ENCODE measurements at regions of chr2 and their contacts with region 1.

Region 1: GRCh38 chr2:74587664-74588277 is 33.3 kb downstream of the DOK1 start:
- DNase-seq: peak; percentile 43
- ATAC-seq: peak; percentile 96
- H3K4me3 Mint-ChIP-seq: no peak overlapping the region
- H3K27ac Mint-ChIP-seq: no peak overlapping the region
- H3K4me1 Mint-ChIP-seq: peaks cover 8% of the 10 kb centered on the region
- H3K27me3 Mint-ChIP-seq: peaks cover 4% of the 10 kb centered on the region
- CTCF ChIP-seq: no peak

Region 2: DNA sequence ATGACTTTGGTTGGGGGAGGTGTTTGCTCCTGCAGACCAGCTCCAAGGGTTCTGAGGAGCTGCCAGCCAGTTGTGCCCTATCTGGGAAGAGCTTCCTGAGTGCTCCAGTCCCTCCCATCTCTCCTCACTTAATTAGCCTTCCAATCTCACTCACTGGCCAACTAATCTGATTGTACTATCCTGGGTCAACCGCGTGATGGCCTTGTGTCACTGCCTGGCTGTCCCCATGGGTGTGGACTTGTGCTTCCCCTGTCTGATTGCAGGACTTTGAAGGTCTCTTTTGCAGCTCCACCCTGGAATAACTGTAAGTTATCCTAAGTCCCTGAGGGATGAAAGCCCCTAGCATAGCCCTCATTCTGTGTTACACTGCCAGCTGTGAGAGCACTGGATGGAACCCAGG is 309.6 kb before region 1 on chr2:
- CTCF ChIA-PET with region 1: no interaction called
- POLR2A ChIA-PET with region 1: no interaction called
- intact Hi-C with region 1: no loop called
- DNase-seq: no peak
- ATAC-seq: no peak
- H3K4me3 Mint-ChIP-seq: no peak overlapping the region
- H3K27ac Mint-ChIP-seq: no peak overlapping the region
- H3K4me1 Mint-ChIP-seq: peaks cover 10% of the 10 kb centered on the region
- H3K27me3 Mint-ChIP-seq: peaks cover 1% of the 10 kb centered on the region
- CTCF ChIP-seq: no peak

Region 3: GRCh38 chr2:74391580-74392448 is 196.0 kb before region 1 on chr2:
- CTCF ChIA-PET with region 1: interaction called, 6 read pairs
- POLR2A ChIA-PET with region 1: no interaction called
- intact Hi-C with region 1: loop called (anchors 2 kb)
- DNase-seq: peak; percentile 94
- ATAC-seq: peak; percentile 89
- H3K4me3 Mint-ChIP-seq: peak overlapping the region; percentile 96
- H3K27ac Mint-ChIP-seq: peak overlapping the region; percentile 99
- H3K4me1 Mint-ChIP-seq: peaks cover 6% of the 10 kb centered on the region
- H3K27me3 Mint-ChIP-seq: peaks cover 4% of the 10 kb centered on the region
- CTCF ChIP-seq: peak; percentile 93

Region 4: DNA sequence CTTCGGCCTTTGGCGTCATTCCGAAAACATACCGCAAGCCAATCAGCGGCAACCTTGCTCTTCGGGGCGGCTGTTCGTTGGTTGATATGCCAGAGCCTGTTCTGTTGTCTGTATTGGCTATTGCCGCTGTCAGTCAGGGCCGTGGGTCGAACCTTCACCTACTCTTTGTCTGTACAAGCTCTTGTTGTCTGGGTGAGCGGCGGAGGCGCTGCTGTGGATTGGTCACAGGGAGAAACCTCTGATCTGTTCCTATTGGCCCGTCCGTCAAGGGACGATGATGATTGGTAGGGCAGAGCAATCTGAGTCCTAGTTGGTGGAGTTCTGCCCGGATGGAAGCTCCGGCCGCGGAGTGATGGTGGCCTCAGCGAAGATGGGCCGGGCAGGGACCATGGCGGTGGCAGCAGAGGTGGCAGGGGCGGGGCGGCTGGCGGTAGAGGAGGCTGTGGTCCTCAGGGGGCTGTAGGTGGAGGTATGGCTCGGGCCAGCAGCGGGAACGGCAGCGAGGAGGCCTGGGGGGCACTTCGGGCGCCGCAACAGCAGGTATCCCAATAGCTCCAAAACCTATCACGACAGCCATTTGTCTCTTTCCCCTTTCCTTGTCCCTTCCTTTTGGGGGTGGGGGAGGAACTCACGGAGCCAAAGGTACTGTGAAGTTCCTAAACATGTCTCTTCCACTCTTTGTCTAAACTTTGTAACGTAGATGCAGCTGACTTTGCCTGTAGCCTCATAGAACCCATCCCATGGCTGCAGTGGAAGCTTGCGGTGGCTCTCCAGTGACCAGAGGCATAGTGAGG is 129.4 kb before region 1 on chr2 and contains the start of gene WBP1:
- CTCF ChIA-PET with region 1: interaction called, 12 read pairs
- POLR2A ChIA-PET with region 1: interaction called, 10 read pairs
- intact Hi-C with region 1: no loop called
- DNase-seq: peak; percentile 87
- ATAC-seq: peak; percentile 81
- H3K4me3 Mint-ChIP-seq: peak within 1 kb of the TSS; percentile 99
- H3K27ac Mint-ChIP-seq: peak within 1 kb of the TSS; percentile 100
- H3K4me1 Mint-ChIP-seq: peaks cover 62% of the 10 kb centered on the region
- H3K27me3 Mint-ChIP-seq: no peaks in the 10 kb centered on the region
- CTCF ChIP-seq: no peak
- total RNA-seq, gene WBP1: 61.4 and 65.3 TPM in 2 replicates

Region 5: GRCh38 chr2:74566754-74567085 is 21.1 kb before region 1 on chr2:
- CTCF ChIA-PET with region 1: interaction called, 16 read pairs
- POLR2A ChIA-PET with region 1: no interaction called
- intact Hi-C with region 1: loop called (anchors 2 kb)
- DNase-seq: no peak
- ATAC-seq: no peak
- H3K4me3 Mint-ChIP-seq: no peak overlapping the region
- H3K27ac Mint-ChIP-seq: no peak overlapping the region
- H3K4me1 Mint-ChIP-seq: peaks cover 5% of the 10 kb centered on the region
- H3K27me3 Mint-ChIP-seq: no peaks in the 10 kb centered on the region
- CTCF ChIP-seq: no peak

Region 6: DNA sequence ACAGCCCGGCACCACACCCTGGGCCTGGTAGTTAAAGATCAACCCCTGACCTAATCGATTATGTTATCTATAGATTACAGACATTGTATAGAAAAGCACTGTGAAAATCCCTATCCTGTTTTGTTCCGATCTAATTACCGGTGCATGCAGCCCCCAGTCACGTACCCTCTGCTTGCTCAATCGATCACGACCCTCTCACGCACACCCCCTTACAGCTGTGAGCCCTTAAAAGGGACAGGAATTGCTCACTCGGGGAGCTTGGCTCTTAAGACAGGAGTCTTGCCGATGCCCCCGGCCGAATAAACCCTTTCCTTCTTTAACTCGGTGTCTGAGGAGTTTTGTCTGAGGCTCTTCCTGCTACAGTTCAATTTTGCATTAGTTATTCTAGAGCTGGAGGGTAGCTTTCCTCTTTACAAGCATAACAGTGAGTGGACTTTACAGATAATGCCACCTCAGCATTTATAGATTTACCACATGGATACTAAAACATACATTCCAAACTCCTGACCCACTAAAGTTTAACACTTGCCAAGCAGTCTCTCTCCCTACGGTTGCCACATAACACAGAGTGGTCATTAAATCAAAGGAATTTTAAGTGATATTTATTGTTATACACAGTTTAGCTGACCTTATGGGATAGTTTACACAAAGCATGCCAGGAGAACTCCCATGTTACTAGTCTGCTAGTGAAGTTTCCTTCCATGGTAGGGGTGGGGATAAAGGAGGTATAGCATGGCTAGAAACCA is 872.0 kb after region 1 on chr2:
- CTCF ChIA-PET with region 1: no interaction called
- POLR2A ChIA-PET with region 1: no interaction called
- intact Hi-C with region 1: no loop called
- DNase-seq: no peak
- ATAC-seq: no peak
- H3K4me3 Mint-ChIP-seq: no peak overlapping the region
- H3K27ac Mint-ChIP-seq: no peak overlapping the region
- H3K4me1 Mint-ChIP-seq: peaks cover 2% of the 10 kb centered on the region
- H3K27me3 Mint-ChIP-seq: peaks cover 18% of the 10 kb centered on the region
- CTCF ChIP-seq: no peak

Measured in activated B cell treated with CpG ODN at 0.5 μM for 24 hours (primary cell).